Activated naive CD4-positive, alpha-beta T cell treated with anti-CD3 and anti-CD28 coated beads for 36 hours (primary cell): ENCODE measurements at regions of chr1 and their contacts with region 1.

Region 1: GRCh38 chr1:92317836-92318493 is 19.1 kb downstream of the RPAP2 start:
- DNase-seq: no peak
- H3K4me3 Mint-ChIP-seq: no peak overlapping the region
- H3K27ac Mint-ChIP-seq: no peak overlapping the region
- H3K4me1 Mint-ChIP-seq: peaks cover 55% of the 10 kb centered on the region
- H3K27me3 Mint-ChIP-seq: no peaks in the 10 kb centered on the region

Region 2: DNA sequence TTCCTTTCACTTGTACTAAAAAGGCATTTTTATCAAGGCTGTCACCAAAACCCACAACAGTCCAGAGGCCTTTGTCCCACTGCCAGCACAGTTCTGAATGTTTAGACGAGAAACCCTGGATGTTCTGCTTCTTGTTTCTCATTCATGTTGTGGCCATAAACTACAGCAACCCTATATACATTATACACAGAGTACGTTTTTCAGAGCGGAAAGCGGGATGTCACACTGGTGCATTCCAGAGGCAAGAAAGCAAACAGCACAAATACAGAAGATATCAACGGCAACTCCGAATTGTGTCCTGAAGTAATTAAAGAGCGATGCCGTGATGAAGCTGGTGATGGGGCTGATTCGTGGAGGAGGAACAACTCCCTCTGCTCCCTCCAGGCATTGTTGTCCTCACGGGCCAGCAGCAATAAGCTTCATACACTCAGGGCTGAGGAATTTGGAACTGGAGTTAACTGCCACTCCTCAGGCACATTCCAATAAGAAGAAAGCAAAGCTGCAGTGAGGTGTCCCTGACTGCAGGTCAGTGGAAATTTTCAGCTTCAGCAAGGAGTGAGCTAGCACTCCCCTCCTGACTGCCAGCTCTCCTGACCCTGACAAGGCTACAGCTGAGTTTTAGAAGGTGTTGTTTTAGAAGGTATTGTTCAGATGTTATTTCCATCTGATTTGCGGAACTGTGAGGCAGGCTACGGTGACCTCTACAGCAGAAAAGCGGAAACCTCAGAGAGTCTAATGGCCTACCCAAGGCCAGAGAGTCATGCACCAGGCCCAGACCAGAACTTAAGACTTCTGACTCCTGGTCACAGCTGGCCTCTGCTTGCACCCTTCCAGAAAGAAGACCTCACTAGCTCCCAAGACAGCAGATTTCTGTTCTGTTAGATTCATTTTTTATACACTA is 581.0 kb before region 1 on chr1:
- CTCF ChIA-PET with region 1: no interaction called
- intact Hi-C with region 1: no loop called
- DNase-seq: no peak
- H3K4me3 Mint-ChIP-seq: no peak overlapping the region
- H3K27ac Mint-ChIP-seq: no peak overlapping the region
- H3K4me1 Mint-ChIP-seq: peaks cover 10% of the 10 kb centered on the region
- H3K27me3 Mint-ChIP-seq: no peaks in the 10 kb centered on the region

Region 3: DNA sequence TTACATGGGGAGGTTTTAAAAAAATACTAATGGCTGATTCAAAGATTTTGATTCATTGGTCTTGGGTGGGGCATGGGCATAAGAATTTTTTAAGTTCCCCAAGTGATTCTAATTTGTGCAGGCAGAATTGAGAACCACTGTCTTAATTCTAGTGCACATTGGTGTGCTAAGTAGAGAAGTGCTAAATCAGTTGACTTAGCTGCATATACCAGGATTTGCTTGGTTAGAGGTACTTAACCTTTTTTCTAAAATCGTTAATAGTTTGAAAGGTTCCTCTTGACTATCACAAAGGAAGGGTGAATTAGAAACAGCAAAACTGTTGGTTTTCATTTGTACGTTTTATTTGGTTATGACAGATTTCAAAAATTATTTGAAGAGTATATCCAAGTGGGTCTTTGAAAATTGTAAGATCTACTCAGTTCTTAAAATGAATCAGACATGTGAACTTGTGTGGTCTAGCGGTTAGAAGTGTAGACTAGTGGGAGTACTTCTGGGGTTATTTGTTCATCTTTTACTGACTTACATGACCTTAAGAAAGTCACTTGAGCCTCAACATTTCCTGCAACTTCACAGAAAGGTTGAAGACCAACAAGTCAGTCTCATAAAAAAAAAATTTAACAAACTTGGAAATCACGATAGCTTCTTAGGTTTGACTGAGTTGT is 47.5 kb after region 1 on chr1:
- CTCF ChIA-PET with region 1: no interaction called
- intact Hi-C with region 1: loop called (anchors 2 kb)
- DNase-seq: no peak
- H3K4me3 Mint-ChIP-seq: no peak overlapping the region
- H3K27ac Mint-ChIP-seq: no peak overlapping the region
- H3K4me1 Mint-ChIP-seq: peaks cover 39% of the 10 kb centered on the region
- H3K27me3 Mint-ChIP-seq: no peaks in the 10 kb centered on the region